SK-N-SH (cell line): ENCODE measurements at regions of chr14 and their contacts with region 1.

Region 1: GRCh38 chr14:77097700-77098528 is at the start of gene CIPC:
- DNase-seq: peak; percentile 98
- H3K4me3 ChIP-seq: peak within 1 kb of the TSS; percentile 64 to 94
- H3K27ac ChIP-seq: peak within 1 kb of the TSS; percentile 88 to 90
- H3K4me1 ChIP-seq: peaks cover 11 to 16% of the 10 kb centered on the region in 2 experiments
- H3K27me3 ChIP-seq: no peaks in the 10 kb centered on the region
- CTCF ChIP-seq: no peak
- EP300 ChIP-seq: peak; percentile 43 to 67; a peak in 3 of 4 replicates
- RAD21 ChIP-seq: no peak
- polyA plus RNA-seq, gene CIPC: 6.5 and 9.6 TPM in 2 replicates

Region 2: GRCh38 chr14:77067632-77068514 is 30.0 kb before region 1 on chr14:
- CTCF ChIA-PET with region 1: interaction called, 255 read pairs
- POLR2A ChIA-PET with region 1: no interaction called
- DNase-seq: peak; percentile 84
- H3K4me3 ChIP-seq: no peak overlapping the region; a peak in 1 of 4 replicates
- H3K27ac ChIP-seq: no peak overlapping the region
- H3K4me1 ChIP-seq: peaks cover 0 to 14% of the 10 kb centered on the region in 2 experiments; a peak in 2 of 4 replicates
- H3K27me3 ChIP-seq: no peaks in the 10 kb centered on the region
- CTCF ChIP-seq: peak; percentile 92
- EP300 ChIP-seq: no peak
- RAD21 ChIP-seq: peak; percentile 95

Region 3: GRCh38 chr14:77086017-77086736 is 11.7 kb before region 1 on chr14:
- CTCF ChIA-PET with region 1: interaction called, 61 read pairs
- POLR2A ChIA-PET with region 1: no interaction called
- DNase-seq: no peak
- H3K4me3 ChIP-seq: no peak overlapping the region
- H3K27ac ChIP-seq: no peak overlapping the region
- H3K4me1 ChIP-seq: peaks cover 0 to 5% of the 10 kb centered on the region in 2 experiments; a peak in 2 of 4 replicates
- H3K27me3 ChIP-seq: no peaks in the 10 kb centered on the region; the same call in 1 of the 2 replicates
- CTCF ChIP-seq: no peak
- EP300 ChIP-seq: no peak
- RAD21 ChIP-seq: no peak

Region 4: GRCh38 chr14:77124345-77125280 is 26.7 kb after region 1 on chr14:
- CTCF ChIA-PET with region 1: interaction called, 13 read pairs
- POLR2A ChIA-PET with region 1: no interaction called
- DNase-seq: peak; percentile 92
- H3K4me3 ChIP-seq: peak overlapping the region; percentile 53 to 58; a peak in 3 of 4 replicates
- H3K27ac ChIP-seq: no peak overlapping the region
- H3K4me1 ChIP-seq: peaks cover 0 to 20% of the 10 kb centered on the region in 2 experiments; a peak in 1 of 4 replicates
- H3K27me3 ChIP-seq: no peaks in the 10 kb centered on the region
- CTCF ChIP-seq: peak; percentile 53
- EP300 ChIP-seq: no peak
- RAD21 ChIP-seq: peak; percentile 15; the same call in 1 of the 2 replicates

Region 5: GRCh38 chr14:78316786-78317185 is 1218.9 kb after region 1 on chr14:
- CTCF ChIA-PET with region 1: no interaction called
- POLR2A ChIA-PET with region 1: no interaction called
- DNase-seq: no peak
- H3K4me3 ChIP-seq: no peak overlapping the region
- H3K27ac ChIP-seq: no peak overlapping the region
- H3K4me1 ChIP-seq: no peaks in the 10 kb centered on the region; a peak in 1 of 4 replicates
- H3K27me3 ChIP-seq: no peaks in the 10 kb centered on the region
- CTCF ChIP-seq: no peak
- EP300 ChIP-seq: no peak
- RAD21 ChIP-seq: no peak